ENCODE measurements at regions of chr15 and their contacts with region 1.

Region 1: DNA sequence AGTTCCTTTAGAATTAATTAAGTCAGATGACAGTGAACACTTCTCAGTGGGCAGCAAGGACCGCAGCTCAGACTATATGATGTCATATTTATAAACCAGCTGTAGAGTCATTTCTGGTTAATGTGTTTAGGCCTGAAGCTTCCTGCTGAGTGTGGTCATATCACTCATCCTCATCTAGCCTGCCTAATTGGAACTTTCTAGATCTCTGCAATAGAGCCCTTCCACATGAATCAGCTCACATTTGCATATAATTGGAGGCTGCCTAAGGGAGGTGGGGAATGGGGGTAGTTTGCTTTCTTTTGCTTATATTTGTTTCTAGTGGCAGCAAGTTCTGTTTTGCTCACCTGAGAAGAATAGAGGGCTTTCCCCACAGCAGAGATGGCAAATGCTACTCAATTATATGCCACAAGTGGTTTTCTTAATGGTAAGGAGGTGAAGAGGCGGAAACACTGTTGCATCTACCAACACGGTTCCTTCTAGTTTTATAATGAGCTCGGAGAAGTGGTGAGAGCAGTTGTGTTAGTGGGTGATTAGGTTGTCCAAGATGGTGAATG is 148.1 kb downstream of the KLHL25 start:
- DNase-seq: peak; percentile 14
- H3K4me3 Mint-ChIP-seq: peak overlapping the region; percentile 30
- H3K27ac Mint-ChIP-seq: peak overlapping the region; percentile 92
- H3K4me1 Mint-ChIP-seq: peaks cover 44% of the 10 kb centered on the region
- H3K27me3 Mint-ChIP-seq: no peaks in the 10 kb centered on the region

Region 2: GRCh38 chr15:85330901-85331588 is 315.6 kb before region 1 on chr15:
- intact Hi-C with region 1: loop called (anchors 1 kb)
- DNase-seq: peak; percentile 72
- H3K4me3 Mint-ChIP-seq: peak overlapping the region; percentile 88
- H3K27ac Mint-ChIP-seq: peak overlapping the region; percentile 92
- H3K4me1 Mint-ChIP-seq: peaks cover 51% of the 10 kb centered on the region
- H3K27me3 Mint-ChIP-seq: no peaks in the 10 kb centered on the region

Region 3: GRCh38 chr15:85625856-85626255 is 20.8 kb before region 1 on chr15:
- intact Hi-C with region 1: loop called (anchors 1 kb)
- DNase-seq: peak; percentile 35
- H3K4me3 Mint-ChIP-seq: peak overlapping the region; percentile 41
- H3K27ac Mint-ChIP-seq: peak overlapping the region; percentile 89
- H3K4me1 Mint-ChIP-seq: peaks cover 56% of the 10 kb centered on the region
- H3K27me3 Mint-ChIP-seq: no peaks in the 10 kb centered on the region

Region 4: DNA sequence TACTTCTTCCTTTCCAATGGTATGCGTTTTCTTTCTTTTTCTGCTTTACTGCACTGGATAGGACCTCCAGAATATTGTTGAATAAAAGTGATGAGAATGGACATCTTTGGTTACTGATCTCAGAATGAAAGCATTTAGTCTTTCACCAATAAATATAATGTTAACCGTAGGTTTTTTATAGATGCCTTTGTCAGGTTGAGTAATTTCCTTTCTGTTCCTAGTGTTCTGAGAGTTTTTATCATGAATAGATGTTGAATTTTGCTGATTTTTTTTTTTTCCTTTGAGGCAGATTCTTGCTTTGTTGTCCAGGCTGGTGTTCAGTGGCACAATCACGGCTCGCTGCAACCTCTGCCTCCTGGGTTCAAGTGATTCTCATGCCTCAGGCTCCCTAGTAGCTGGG is 10.3 kb before region 1 on chr15:
- intact Hi-C with region 1: no loop called
- DNase-seq: no peak
- H3K4me3 Mint-ChIP-seq: no peak overlapping the region
- H3K27ac Mint-ChIP-seq: no peak overlapping the region
- H3K4me1 Mint-ChIP-seq: peaks cover 34% of the 10 kb centered on the region
- H3K27me3 Mint-ChIP-seq: no peaks in the 10 kb centered on the region

Region 5: DNA sequence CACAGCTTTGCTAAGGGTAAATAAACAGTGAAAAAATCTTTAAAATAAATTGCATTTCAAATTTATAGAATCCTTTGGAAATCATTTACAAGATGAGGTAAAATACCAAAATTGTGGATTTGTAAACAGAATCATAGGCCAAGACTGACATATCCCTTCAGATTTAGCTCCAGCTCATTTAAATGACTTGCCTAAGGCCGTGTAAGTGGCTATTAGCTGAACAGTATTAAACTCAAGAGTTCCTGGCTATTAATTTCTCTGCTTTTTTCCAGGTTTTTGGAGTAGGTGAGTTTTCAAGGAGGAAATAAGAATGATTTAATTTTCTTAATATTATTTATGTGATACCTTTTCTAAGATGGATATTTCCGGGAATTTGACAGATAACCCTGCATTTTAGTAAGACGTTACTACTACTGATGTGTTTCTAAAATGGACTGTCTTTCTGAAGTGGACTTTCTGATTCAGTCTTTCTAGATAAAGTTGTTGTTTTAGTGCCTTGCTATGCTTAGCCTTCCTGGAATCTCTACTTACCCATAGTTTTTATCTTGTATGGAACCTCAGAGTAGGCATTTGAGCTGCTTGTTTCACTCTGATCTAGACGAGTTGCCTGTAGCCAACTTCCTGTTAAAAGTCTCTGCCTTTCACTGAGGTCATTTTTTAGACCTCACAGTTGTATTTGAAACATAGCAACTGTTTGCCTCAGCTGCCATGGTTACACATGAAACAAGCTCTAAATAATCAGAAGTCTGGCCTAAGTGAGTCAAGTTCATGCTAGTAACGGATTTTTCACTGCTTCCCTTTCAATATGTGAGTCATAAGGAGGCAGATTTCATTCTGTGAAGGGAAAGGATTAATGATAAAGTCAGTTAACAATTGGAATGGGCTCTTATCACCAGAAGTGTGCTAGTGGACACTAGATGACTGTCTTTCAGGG is 21.1 kb after region 1 on chr15:
- intact Hi-C with region 1: loop called (anchors 1 kb)
- DNase-seq: peak; percentile 46
- H3K4me3 Mint-ChIP-seq: peak overlapping the region; percentile 20
- H3K27ac Mint-ChIP-seq: peak overlapping the region; percentile 97
- H3K4me1 Mint-ChIP-seq: peaks cover 22% of the 10 kb centered on the region
- H3K27me3 Mint-ChIP-seq: no peaks in the 10 kb centered on the region

Region 6: DNA sequence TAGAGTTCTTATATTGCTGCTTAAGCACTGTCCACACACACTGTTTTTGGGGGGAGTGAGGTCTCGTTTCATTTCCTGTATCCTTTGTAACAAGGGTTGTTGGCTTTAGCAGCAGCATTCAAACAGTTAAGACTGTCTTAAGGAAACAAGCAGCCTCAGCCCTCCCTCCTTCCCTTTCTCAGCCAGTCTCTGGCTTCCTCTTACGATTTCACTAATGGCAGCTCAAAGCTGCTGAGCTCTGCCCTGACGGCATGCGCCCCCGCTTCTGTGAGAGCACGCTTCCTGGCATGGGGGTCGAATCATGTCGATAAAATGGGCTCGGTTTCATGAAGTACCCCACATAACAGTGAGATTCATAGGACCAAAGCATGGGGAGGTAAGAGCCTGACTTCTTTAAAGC is 43.1 kb after region 1 on chr15:
- intact Hi-C with region 1: loop called (anchors 1 kb)
- DNase-seq: peak; percentile 56
- H3K4me3 Mint-ChIP-seq: peak overlapping the region; percentile 96
- H3K27ac Mint-ChIP-seq: peak overlapping the region; percentile 100
- H3K4me1 Mint-ChIP-seq: peaks cover 73% of the 10 kb centered on the region
- H3K27me3 Mint-ChIP-seq: no peaks in the 10 kb centered on the region

Region 7: DNA sequence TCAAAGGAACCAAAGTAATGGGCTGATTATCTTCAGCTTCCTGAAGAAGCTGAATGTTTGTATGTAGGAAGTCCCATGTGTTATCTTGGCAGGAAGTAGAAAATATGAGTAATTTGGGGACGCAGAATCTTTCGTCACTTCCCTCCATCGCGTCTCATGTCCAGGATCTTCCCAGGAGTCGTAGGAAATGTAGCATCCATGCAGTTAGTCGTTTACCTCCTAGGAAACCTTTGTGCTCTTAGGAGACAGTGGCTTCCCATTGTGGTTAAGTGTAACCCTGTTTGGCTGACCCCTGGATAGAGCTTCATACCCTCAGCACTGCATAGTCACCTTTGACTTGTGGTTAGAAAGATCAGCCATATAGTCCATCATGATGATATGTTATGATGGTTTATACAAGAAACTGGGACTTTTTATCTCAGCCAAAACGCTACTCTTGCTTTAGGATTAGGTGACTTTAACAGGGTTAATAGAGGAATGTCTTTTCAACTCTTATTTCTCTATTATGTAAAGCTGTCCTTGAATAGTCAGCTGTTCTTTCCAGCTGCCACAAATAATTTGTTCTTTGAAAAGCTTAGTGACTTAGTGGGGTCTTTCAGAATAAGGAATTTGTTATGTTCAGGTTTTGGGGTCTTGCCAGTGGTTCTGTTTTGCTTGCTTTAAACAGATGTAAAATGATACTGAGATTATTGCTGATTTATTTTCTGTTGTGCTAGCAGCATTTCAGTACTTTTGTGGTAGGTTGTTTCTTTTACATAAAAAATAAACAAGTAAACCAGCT is 55.9 kb after region 1 on chr15:
- intact Hi-C with region 1: loop called (anchors 1 kb)
- DNase-seq: peak; percentile 29
- H3K4me3 Mint-ChIP-seq: peak overlapping the region; percentile 78
- H3K27ac Mint-ChIP-seq: peak overlapping the region; percentile 98
- H3K4me1 Mint-ChIP-seq: peaks cover 66% of the 10 kb centered on the region
- H3K27me3 Mint-ChIP-seq: no peaks in the 10 kb centered on the region